ENCODE measurements at regions of chr15 and their contacts with region 1.

Region 1: GRCh38 chr15:81274931-81275707 is 48.8 kb downstream of the STARD5 start:
- DNase-seq: peak; percentile 42
- H3K4me3 ChIP-seq: no peak overlapping the region
- H3K27ac ChIP-seq: peak overlapping the region; percentile 66
- H3K4me1 ChIP-seq: peaks cover 9% of the 10 kb centered on the region
- H3K27me3 ChIP-seq: no peaks in the 10 kb centered on the region
- CTCF ChIP-seq: peak; percentile 81

Region 2: GRCh38 chr15:81091889-81092558 is 183.1 kb before region 1 on chr15:
- intact Hi-C with region 1: no loop called
- DNase-seq: no peak
- H3K4me3 ChIP-seq: peak overlapping the region; percentile 37
- H3K27ac ChIP-seq: peak overlapping the region; percentile 85
- H3K4me1 ChIP-seq: peaks cover 39% of the 10 kb centered on the region
- H3K27me3 ChIP-seq: no peaks in the 10 kb centered on the region
- CTCF ChIP-seq: no peak

Region 3: GRCh38 chr15:81336568-81336967 is 61.4 kb after region 1 on chr15:
- intact Hi-C with region 1: loop called (anchors 10 kb)
- DNase-seq: no peak
- H3K4me3 ChIP-seq: no peak overlapping the region
- H3K27ac ChIP-seq: no peak overlapping the region
- H3K4me1 ChIP-seq: peaks cover 25% of the 10 kb centered on the region
- H3K27me3 ChIP-seq: no peaks in the 10 kb centered on the region
- CTCF ChIP-seq: peak; percentile 31

Region 4: DNA sequence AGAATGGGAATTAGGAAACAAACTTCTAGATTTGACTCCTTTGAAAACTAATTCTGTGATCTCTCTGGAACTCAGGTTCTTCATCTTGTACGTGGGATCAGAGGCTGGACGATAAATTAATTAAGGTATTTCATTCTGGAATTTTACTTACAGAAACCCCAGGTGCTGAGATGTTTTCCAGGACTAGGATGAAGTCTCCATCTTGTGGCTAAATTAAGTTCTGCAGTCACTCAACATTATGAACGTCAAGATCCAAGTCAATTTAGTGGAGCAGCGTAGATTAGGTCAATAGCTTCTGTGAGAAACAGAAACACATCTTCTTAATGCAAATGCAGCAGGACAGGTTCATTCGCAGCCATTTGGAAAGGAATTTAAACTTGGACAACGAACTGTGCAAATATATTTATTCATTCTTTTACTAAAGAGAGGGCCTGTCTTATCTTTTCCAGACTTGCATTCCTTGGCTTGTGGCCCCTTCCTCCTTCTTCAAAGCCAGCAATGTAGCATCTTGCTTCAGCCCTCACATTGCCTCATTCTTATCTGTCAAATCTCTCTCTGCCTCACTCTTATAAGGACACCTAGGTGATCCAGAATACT is 125.6 kb after region 1 on chr15:
- intact Hi-C with region 1: loop called (anchors 2 kb)
- DNase-seq: no peak
- H3K4me3 ChIP-seq: no peak overlapping the region
- H3K27ac ChIP-seq: no peak overlapping the region
- H3K4me1 ChIP-seq: no peaks in the 10 kb centered on the region
- H3K27me3 ChIP-seq: peaks cover 7% of the 10 kb centered on the region
- CTCF ChIP-seq: peak; percentile 86